ENCODE measurements at regions of chr6 and their contacts with region 1.

Region 1: GRCh38 chr6:37169496-37170272 is at the start of gene PIM1:
- DNase-seq: peak; percentile 98
- ATAC-seq: peak; percentile 84
- H3K4me3 ChIP-seq: peak within 1 kb of the TSS; percentile 23 to 87 (median 82)
- H3K4me3 Mint-ChIP-seq: peak within 1 kb of the TSS; percentile 92
- H3K27ac ChIP-seq: peak within 1 kb of the TSS; percentile 68 to 85
- H3K27ac Mint-ChIP-seq: peak within 1 kb of the TSS; percentile 93
- H3K4me1 ChIP-seq: peaks cover 38 to 46% of the 10 kb centered on the region in 2 donors
- H3K4me1 Mint-ChIP-seq: peaks cover 45% of the 10 kb centered on the region
- H3K27me3 ChIP-seq: no peaks in the 10 kb centered on the region
- H3K27me3 Mint-ChIP-seq: no peaks in the 10 kb centered on the region
- CTCF ChIP-seq: no peak
- total RNA-seq, gene PIM1: 99.7 and 102 TPM in 2 replicates

Region 2: DNA sequence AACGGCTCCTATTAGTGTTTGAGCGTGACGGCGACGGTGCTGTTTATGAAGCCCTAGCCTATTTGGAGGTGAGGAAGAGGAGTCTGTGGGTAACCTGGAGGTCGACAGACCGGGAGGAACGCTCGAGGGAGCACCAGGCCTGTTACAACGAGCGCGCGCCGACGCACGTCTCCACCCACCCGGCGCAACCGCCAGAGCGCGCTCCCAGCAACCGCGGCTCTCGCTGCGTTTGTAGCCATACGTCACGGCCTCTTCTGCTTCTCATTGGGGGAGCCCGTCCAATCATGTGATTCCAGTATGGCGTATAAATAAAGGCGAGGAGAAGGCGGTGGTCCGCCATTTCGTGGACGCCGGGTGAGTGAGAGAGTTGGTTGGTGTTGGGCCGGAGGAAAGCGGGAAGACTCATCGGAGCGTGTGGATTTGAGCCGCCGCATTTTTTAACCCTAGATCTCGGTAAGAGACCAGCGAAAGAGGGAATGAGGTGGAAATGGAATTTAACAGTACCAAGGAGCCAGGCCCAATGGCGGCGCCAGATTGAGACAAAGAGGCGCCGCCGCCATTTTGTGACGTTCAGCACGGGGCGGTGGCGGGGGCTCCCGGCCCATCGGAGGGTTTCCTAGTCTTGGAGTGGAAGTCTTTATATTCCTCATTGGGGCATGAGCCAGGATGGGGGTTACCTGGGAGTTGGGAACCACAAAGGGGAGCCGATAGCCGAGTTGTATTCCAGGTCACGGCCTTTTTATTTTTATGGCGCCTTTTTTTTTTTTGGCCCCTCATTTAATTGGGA is 575.5 kb before region 1 on chr6 and contains the start of gene SRSF3:
- CTCF ChIA-PET with region 1: no interaction called
- POLR2A ChIA-PET with region 1: no interaction called
- intact Hi-C with region 1: loop called (anchors 10 kb)
- DNase-seq: peak; percentile 99
- ATAC-seq: peak; percentile 91
- H3K4me3 ChIP-seq: peak within 1 kb of the TSS; percentile 91 to 100 (median 97)
- H3K4me3 Mint-ChIP-seq: peak within 1 kb of the TSS; percentile 90
- H3K27ac ChIP-seq: peak within 1 kb of the TSS; percentile 93 to 99
- H3K27ac Mint-ChIP-seq: peak within 1 kb of the TSS; percentile 97
- H3K4me1 ChIP-seq: peaks cover 44 to 55% of the 10 kb centered on the region in 2 donors
- H3K4me1 Mint-ChIP-seq: peaks cover 48% of the 10 kb centered on the region
- H3K27me3 ChIP-seq: no peaks in the 10 kb centered on the region
- H3K27me3 Mint-ChIP-seq: no peaks in the 10 kb centered on the region
- CTCF ChIP-seq: peak; percentile 29
- total RNA-seq, gene SRSF3: 316 and 331 TPM in 2 replicates

Region 3: DNA sequence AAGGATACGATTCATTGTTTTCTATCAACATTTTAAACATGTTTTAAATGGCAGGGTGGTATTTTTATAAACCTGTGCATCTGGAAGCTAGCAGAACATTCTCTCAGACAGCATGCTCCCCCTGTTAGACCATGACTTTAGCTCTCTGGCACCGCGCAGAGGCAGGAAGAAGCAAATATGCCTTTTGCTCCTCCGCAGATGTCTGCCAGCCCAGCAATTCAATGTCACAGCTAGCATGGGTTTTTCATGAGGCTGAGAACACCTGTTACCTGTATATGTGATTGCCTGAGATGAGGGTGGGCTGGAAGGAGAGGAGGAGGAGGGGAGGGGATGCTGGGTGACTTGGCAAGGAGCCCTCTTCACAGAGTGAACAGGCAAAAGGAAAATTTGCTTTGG is 190.3 kb before region 1 on chr6:
- CTCF ChIA-PET with region 1: interaction called, 10 read pairs
- POLR2A ChIA-PET with region 1: no interaction called
- intact Hi-C with region 1: no loop called
- DNase-seq: peak; percentile 42
- ATAC-seq: no peak
- H3K4me3 ChIP-seq: no peak overlapping the region
- H3K4me3 Mint-ChIP-seq: no peak overlapping the region
- H3K27ac ChIP-seq: no peak overlapping the region
- H3K27ac Mint-ChIP-seq: peak overlapping the region; percentile 47
- H3K4me1 ChIP-seq: peaks cover 16 to 17% of the 10 kb centered on the region in 2 donors
- H3K4me1 Mint-ChIP-seq: peaks cover 37% of the 10 kb centered on the region
- H3K27me3 ChIP-seq: no peaks in the 10 kb centered on the region
- H3K27me3 Mint-ChIP-seq: no peaks in the 10 kb centered on the region
- CTCF ChIP-seq: no peak

Region 4: GRCh38 chr6:37018198-37019064 is 151.3 kb before region 1 on chr6:
- CTCF ChIA-PET with region 1: interaction called, 510 read pairs
- POLR2A ChIA-PET with region 1: interaction called, 11 read pairs
- intact Hi-C with region 1: loop called (anchors 1 kb)
- DNase-seq: peak; percentile 88
- ATAC-seq: peak; percentile 96
- H3K4me3 ChIP-seq: no peak overlapping the region
- H3K4me3 Mint-ChIP-seq: peak overlapping the region; percentile 19
- H3K27ac ChIP-seq: peak overlapping the region in 1 of 2 donors; percentile 49
- H3K27ac Mint-ChIP-seq: peak overlapping the region; percentile 76
- H3K4me1 ChIP-seq: peaks cover 14 to 21% of the 10 kb centered on the region in 2 donors
- H3K4me1 Mint-ChIP-seq: peaks cover 23% of the 10 kb centered on the region
- H3K27me3 ChIP-seq: no peaks in the 10 kb centered on the region
- H3K27me3 Mint-ChIP-seq: no peaks in the 10 kb centered on the region
- CTCF ChIP-seq: peak; percentile 90

Region 5: DNA sequence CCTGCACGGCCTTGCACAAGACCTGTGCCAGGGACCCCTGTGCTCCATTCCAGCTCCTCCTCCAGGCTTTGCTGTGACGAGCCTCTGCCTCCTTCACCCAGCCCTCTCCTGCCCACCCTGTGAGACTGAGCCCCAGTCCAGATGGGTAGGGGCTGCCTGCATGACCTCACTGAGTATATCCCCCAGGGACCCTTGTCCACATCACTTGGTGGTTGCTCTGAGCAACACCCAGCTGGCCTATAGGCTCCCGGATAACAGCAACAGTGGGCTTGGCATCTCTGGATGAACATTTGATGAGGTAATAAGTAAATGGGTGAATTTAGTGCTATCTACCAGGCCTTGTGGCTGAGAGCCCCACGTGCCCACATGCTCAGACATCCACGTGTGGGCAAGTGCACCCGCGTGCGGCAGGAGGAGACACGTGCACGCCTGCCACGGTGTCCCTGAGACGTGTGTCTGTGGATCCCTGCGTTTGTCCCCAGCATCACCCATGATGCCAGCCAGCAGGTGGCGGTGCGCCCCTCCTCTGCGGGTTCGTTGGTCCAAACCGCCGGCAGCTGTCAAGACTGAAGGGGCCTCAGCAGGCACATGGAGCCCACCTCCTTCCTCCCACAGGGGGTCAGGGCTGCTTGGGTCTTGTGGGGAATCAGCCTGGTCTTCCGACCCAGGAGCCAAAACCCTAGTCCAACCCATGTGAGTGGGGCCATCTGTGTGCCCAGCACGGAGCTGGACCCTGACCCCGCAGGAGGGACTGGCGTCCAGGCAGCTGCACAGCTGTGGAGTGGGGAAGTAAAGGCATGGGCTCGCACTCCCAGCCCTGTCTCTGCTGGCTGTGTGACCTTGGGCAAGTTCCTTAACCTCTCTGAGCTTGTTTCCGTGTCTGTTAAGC is 118.3 kb before region 1 on chr6:
- CTCF ChIA-PET with region 1: interaction called, 487 read pairs
- POLR2A ChIA-PET with region 1: interaction called, 121 read pairs
- intact Hi-C with region 1: loop called (anchors 1 kb)
- DNase-seq: peak; percentile 92
- ATAC-seq: peak; percentile 44
- H3K4me3 ChIP-seq: peak overlapping the region in 1 of 5 experiments; percentile 59
- H3K4me3 Mint-ChIP-seq: peak overlapping the region; percentile 71
- H3K27ac ChIP-seq: peak overlapping the region; percentile 91 to 98
- H3K27ac Mint-ChIP-seq: peak overlapping the region; percentile 85
- H3K4me1 ChIP-seq: peaks cover 45 to 54% of the 10 kb centered on the region in 2 donors
- H3K4me1 Mint-ChIP-seq: peaks cover 52% of the 10 kb centered on the region
- H3K27me3 ChIP-seq: no peaks in the 10 kb centered on the region
- H3K27me3 Mint-ChIP-seq: no peaks in the 10 kb centered on the region
- CTCF ChIP-seq: peak; percentile 91

Region 6: DNA sequence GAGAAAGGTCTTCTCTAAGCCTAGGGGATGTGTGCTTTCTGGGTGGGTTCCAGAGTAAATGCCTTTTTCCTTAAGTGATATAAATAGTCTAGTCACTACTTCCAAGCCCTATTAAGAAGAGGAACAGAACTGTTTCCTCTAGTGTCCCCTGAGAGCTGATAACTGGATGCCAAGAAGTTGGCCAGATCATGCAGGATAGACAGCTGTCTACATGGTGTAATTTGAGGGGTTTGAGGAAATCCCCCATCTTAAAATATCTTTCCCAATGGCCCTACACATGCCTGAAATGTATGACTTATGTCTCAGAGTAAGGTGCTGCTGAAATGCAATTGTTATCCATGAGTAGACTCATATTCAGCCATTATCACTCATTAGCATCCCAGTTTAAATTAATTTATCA is 19.9 kb before region 1 on chr6:
- CTCF ChIA-PET with region 1: interaction called, 11 read pairs
- POLR2A ChIA-PET with region 1: interaction called, 5 read pairs
- intact Hi-C with region 1: no loop called
- DNase-seq: no peak
- ATAC-seq: peak; percentile 45
- H3K4me3 ChIP-seq: no peak overlapping the region
- H3K4me3 Mint-ChIP-seq: peak overlapping the region; percentile 79
- H3K27ac ChIP-seq: no peak overlapping the region
- H3K27ac Mint-ChIP-seq: peak overlapping the region; percentile 71
- H3K4me1 ChIP-seq: peaks cover 15 to 18% of the 10 kb centered on the region in 2 donors
- H3K4me1 Mint-ChIP-seq: peaks cover 30% of the 10 kb centered on the region
- H3K27me3 ChIP-seq: no peaks in the 10 kb centered on the region
- H3K27me3 Mint-ChIP-seq: no peaks in the 10 kb centered on the region
- CTCF ChIP-seq: no peak

Region 7: GRCh38 chr6:37190159-37190535 is 20.5 kb after region 1 on chr6:
- CTCF ChIA-PET with region 1: no interaction called
- POLR2A ChIA-PET with region 1: no interaction called
- intact Hi-C with region 1: no loop called
- DNase-seq: no peak
- ATAC-seq: no peak
- H3K4me3 ChIP-seq: no peak overlapping the region
- H3K4me3 Mint-ChIP-seq: no peak overlapping the region
- H3K27ac ChIP-seq: no peak overlapping the region
- H3K27ac Mint-ChIP-seq: peak overlapping the region; percentile 5
- H3K4me1 ChIP-seq: peaks cover 0 to 3% of the 10 kb centered on the region in 2 donors
- H3K4me1 Mint-ChIP-seq: peaks cover 15% of the 10 kb centered on the region
- H3K27me3 ChIP-seq: no peaks in the 10 kb centered on the region
- H3K27me3 Mint-ChIP-seq: no peaks in the 10 kb centered on the region
- CTCF ChIP-seq: no peak

Region 8: GRCh38 chr6:37207903-37208456 is 38.3 kb after region 1 on chr6:
- CTCF ChIA-PET with region 1: interaction called, 321 read pairs
- POLR2A ChIA-PET with region 1: interaction called, 4 read pairs
- intact Hi-C with region 1: loop called (anchors 1 kb)
- DNase-seq: peak; percentile 88
- ATAC-seq: peak; percentile 95
- H3K4me3 ChIP-seq: no peak overlapping the region
- H3K4me3 Mint-ChIP-seq: no peak overlapping the region
- H3K27ac ChIP-seq: no peak overlapping the region
- H3K27ac Mint-ChIP-seq: peak overlapping the region; percentile 3
- H3K4me1 ChIP-seq: peaks cover 4 to 12% of the 10 kb centered on the region in 2 donors
- H3K4me1 Mint-ChIP-seq: peaks cover 14% of the 10 kb centered on the region
- H3K27me3 ChIP-seq: peaks cover 0 to 4% (median 0%) of the 10 kb centered on the region in 4 experiments
- H3K27me3 Mint-ChIP-seq: no peaks in the 10 kb centered on the region
- CTCF ChIP-seq: peak; percentile 85

Measured in B cell (primary cell).